AG04449 (cell line): ENCODE measurements at regions of chr3 and their contacts with region 1.

Region 1: DNA sequence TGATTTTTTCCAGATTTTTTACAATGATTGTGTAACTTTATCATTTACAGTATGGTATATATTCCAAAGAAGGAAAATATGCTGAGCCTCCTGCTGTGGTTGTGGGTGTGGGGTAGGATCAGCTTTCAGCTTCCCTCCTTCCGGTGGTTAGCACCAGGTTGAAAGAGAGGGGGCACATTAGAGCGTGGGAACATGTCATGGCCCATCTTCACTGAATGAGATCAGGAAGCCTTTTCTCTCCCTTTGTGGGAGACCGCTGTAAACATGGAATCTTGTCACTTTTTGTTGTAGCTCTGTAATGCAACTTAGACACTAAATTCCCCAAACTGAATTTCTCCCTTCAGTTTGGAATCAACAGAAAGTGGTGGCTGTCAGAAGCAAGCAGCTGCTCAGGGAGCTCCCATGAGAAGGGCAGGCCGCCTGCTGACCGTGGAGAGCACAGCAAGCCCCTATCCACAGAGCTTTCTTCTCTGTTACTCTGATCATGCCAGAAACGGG is 86.7 kb upstream of the LIMD1 start:
- DNase-seq: no peak
- H3K4me3 ChIP-seq: no peak overlapping the region
- CTCF ChIP-seq: peak; percentile 79

Region 2: DNA sequence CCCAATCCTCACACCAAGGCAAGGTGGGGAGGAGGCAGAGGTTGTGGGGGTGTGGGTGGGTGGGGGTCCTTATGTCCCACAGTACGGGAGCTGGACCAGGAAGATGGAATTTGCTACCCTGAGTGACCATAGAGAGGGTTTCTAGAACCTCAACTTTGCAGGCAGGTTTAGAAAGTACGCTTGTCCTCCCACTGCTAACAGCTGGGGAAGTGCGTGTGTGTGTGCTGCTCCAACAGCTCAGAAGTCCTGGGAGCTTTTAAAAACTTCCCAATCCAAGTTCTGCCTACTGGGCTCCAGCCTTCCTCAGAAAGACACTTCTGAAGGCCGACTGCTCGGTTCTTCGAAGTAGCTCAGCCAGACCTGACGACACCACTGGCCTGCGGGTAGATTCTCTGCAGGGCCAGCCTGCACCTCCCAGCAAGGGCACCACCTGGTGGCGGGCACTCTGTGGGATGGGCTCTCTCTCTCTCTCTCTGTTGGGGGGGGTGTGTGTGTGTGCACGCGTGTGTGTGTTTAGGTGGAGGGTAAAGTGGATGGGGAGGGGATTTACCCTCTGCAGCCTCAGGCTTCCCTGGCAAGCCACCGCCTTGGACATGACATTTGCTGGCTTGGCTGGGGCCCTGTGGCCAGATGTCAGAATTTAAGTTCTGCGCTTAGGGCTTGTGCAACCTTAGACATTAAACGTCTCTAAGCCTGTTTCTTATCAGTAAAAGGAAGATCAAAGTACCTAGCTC is 297.4 kb before region 1 on chr3:
- CTCF ChIA-PET with region 1: interaction called, 16 read pairs
- POLR2A ChIA-PET with region 1: no interaction called
- DNase-seq: no peak
- H3K4me3 ChIP-seq: no peak overlapping the region
- CTCF ChIP-seq: peak; percentile 94

Region 3: GRCh38 chr3:45665101-45665572 is 157.3 kb after region 1 on chr3:
- CTCF ChIA-PET with region 1: interaction called, 481 read pairs
- POLR2A ChIA-PET with region 1: interaction called, 8 read pairs
- DNase-seq: no peak
- H3K4me3 ChIP-seq: no peak overlapping the region
- CTCF ChIP-seq: peak; percentile 35

Region 4: GRCh38 chr3:45688882-45689756 is 181.2 kb after region 1 on chr3 and contains the start of gene SACM1L:
- CTCF ChIA-PET with region 1: interaction called, 48 read pairs
- POLR2A ChIA-PET with region 1: no interaction called
- DNase-seq: peak; percentile 91
- H3K4me3 ChIP-seq: peak within 1 kb of the TSS; percentile 71
- CTCF ChIP-seq: no peak

Region 5: GRCh38 chr3:45741742-45742141 is 233.9 kb after region 1 on chr3:
- CTCF ChIA-PET with region 1: no interaction called
- POLR2A ChIA-PET with region 1: no interaction called
- DNase-seq: no peak
- H3K4me3 ChIP-seq: no peak overlapping the region
- CTCF ChIP-seq: no peak